ENCODE measurements at regions of chr3 and their contacts with region 1.

Region 1: DNA sequence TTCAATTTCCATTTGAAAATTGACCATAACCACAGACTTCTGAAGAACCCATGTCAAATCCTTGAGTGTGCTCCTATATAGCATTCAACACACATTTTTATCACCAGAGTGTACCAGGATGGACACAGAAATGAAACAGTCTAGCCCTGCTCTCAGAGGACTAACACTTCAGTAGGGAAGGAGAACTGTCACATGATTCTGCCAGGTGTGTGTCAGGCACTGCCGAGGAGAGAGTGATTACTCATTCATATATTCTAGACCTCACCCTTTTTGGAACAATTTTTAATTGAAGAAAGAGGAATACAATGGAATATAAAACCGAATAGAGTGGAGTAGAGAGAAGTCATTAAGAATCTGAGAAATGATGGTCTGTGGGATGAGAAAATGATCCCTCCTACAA is 125.8 kb downstream of the ERC2 start:
- DNase-seq: no peak
- ATAC-seq: no peak
- H3K4me3 ChIP-seq: no peak overlapping the region
- H3K27ac ChIP-seq: no peak overlapping the region
- H3K4me1 ChIP-seq: no peaks in the 10 kb centered on the region
- H3K27me3 ChIP-seq: peaks cover 24% of the 10 kb centered on the region
- CTCF ChIP-seq: no peak

Region 2: GRCh38 chr3:56443372-56443771 is 100.9 kb after region 1 on chr3:
- CTCF ChIA-PET with region 1: interaction called, 12 read pairs
- POLR2A ChIA-PET with region 1: no interaction called
- intact Hi-C with region 1: loop called (anchors 1 kb)
- DNase-seq: no peak
- ATAC-seq: no peak
- H3K4me3 ChIP-seq: no peak overlapping the region
- H3K27ac ChIP-seq: no peak overlapping the region
- H3K4me1 ChIP-seq: no peaks in the 10 kb centered on the region
- H3K27me3 ChIP-seq: 0 out of 2 replicates have a peak, but pooled peaks cover 7% of the 10 kb centered on the region
- CTCF ChIP-seq: no peak

Region 3: GRCh38 chr3:56494686-56495322 is 152.3 kb after region 1 on chr3:
- CTCF ChIA-PET with region 1: interaction called, 5 read pairs
- POLR2A ChIA-PET with region 1: no interaction called
- intact Hi-C with region 1: loop called (anchors 1 kb)
- DNase-seq: peak; percentile 95
- ATAC-seq: peak; percentile 95
- H3K4me3 ChIP-seq: no peak overlapping the region
- H3K27ac ChIP-seq: no peak overlapping the region
- H3K4me1 ChIP-seq: no peaks in the 10 kb centered on the region
- H3K27me3 ChIP-seq: peaks cover 52% of the 10 kb centered on the region
- CTCF ChIP-seq: peak; percentile 96

Region 4: DNA sequence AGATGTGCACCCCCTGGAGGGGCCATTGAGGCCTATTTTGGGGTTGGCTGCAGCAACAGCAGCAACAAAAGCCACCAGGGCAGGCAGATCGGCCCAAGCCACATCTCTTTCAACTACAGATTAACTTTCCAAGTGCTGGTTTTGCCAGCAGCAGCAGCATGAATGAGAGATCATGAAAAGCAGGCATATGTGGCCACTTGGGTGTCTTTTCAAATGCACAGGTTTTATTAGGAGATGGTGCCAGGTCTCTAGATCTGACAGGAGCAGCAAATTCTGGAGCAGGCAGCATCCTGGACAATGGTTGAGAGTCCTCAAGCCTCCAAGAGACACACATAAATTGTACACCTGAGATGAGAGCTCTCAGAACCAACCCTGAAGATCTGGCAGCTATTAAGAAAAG is 182.8 kb after region 1 on chr3:
- CTCF ChIA-PET with region 1: no interaction called
- POLR2A ChIA-PET with region 1: no interaction called
- intact Hi-C with region 1: no loop called
- DNase-seq: no peak
- ATAC-seq: no peak
- H3K4me3 ChIP-seq: no peak overlapping the region
- H3K27ac ChIP-seq: no peak overlapping the region
- H3K4me1 ChIP-seq: no peaks in the 10 kb centered on the region
- H3K27me3 ChIP-seq: peaks cover 45% of the 10 kb centered on the region
- CTCF ChIP-seq: no peak

Region 5: DNA sequence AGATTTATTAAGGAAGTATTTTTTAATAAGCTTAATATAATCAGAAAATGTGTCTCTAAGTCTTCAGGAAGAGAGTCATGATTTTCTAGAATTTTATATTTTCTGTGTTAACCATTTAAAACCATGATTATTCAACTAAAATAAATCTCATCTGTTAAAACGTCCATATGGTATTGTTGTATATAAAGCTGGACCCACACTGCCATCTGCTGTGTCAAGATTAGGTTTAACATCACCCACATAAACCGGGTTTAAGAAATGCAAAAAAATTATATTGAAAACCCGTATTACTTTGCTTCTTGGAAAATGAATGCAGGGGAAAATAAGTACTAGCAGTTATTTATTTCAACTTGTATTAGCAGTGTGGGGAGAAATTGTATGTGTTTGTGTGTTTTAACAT is 205.0 kb after region 1 on chr3:
- CTCF ChIA-PET with region 1: no interaction called
- POLR2A ChIA-PET with region 1: no interaction called
- intact Hi-C with region 1: loop called (anchors 1 kb)
- DNase-seq: no peak
- ATAC-seq: peak; percentile 57
- H3K4me3 ChIP-seq: no peak overlapping the region
- H3K27ac ChIP-seq: no peak overlapping the region
- H3K4me1 ChIP-seq: no peaks in the 10 kb centered on the region
- H3K27me3 ChIP-seq: peaks cover 52% of the 10 kb centered on the region
- CTCF ChIP-seq: peak; percentile 49

Region 6: DNA sequence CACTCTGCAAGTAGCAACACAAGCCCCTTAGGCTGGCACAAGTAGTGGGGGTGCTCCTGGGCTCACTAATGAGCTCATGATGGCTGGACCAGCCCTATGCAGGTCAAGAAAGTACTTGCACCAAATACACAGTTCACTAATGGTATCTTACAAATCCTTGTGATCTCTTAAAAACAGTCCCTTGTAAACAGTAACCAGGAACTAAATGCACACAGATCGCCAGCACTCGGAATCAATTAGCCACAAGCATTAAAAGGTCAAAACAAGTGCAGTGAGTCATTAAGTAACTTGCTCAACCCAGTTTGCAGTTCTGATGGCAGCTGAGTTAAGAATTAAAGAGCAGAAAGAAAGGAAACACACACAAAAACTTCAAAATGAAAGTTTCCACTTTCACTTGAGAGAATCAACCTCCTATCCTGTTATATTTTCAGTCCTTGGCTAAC is 416.1 kb after region 1 on chr3:
- CTCF ChIA-PET with region 1: no interaction called
- POLR2A ChIA-PET with region 1: interaction called, 13 read pairs
- intact Hi-C with region 1: no loop called
- DNase-seq: peak; percentile 84
- ATAC-seq: peak; percentile 98
- H3K4me3 ChIP-seq: no peak overlapping the region
- H3K27ac ChIP-seq: peak overlapping the region; percentile 18
- H3K4me1 ChIP-seq: peaks cover 10% of the 10 kb centered on the region
- H3K27me3 ChIP-seq: no peaks in the 10 kb centered on the region
- CTCF ChIP-seq: no peak